H1 (cell line): ENCODE measurements at regions of chr1 and their contacts with region 1.

Region 1: GRCh38 chr1:39214998-39215873 is 10.7 kb downstream of the MACF1 start:
- DNase-seq: peak in 1 of 2 experiments; percentile 47
- H3K4me3 ChIP-seq: no peak overlapping the region
- H3K27ac ChIP-seq: no peak overlapping the region
- H3K4me1 ChIP-seq: peaks cover 10 to 23% (median 13%) of the 10 kb centered on the region in 4 experiments
- H3K27me3 ChIP-seq: no peaks in the 10 kb centered on the region
- CTCF ChIP-seq: no peak
- EP300 ChIP-seq: no peak
- POLR2A ChIP-seq: no peak
- RAD21 ChIP-seq: no peak

Region 2: GRCh38 chr1:39204441-39205081 is 10.7 kb before region 1 on chr1 and contains the start of gene MACF1:
- CTCF ChIA-PET with region 1: interaction called, 22 read pairs
- POLR2A ChIA-PET with region 1: interaction called, 22 read pairs
- DNase-seq: no peak
- H3K4me3 ChIP-seq: peak within 1 kb of the TSS in 1 of 4 experiments; percentile 19; a peak in 3 of 8 replicates
- H3K27ac ChIP-seq: no peak within 1 kb of the TSS; the same call in 1 of the 2 replicates
- H3K4me1 ChIP-seq: peaks cover 8 to 15% (median 10%) of the 10 kb centered on the region in 4 experiments; a peak in 6 of 7 replicates
- H3K27me3 ChIP-seq: no peaks in the 10 kb centered on the region
- CTCF ChIP-seq: peak in 1 of 3 experiments; percentile 6; a peak in 1 of 4 replicates
- EP300 ChIP-seq: no peak
- POLR2A ChIP-seq: no peak
- RAD21 ChIP-seq: peak in 1 of 2 experiments; percentile 24; a peak in 1 of 4 replicates
- total RNA-seq, gene MACF1: 261 and 285 TPM in 2 replicates